H1 (cell line): ENCODE measurements at regions of chr4 and their contacts with region 1.

Region 1: GRCh38 chr4:37188100-37188499 is 56.4 kb upstream of the NWD2 start:
- DNase-seq: peak; percentile 9 to 75
- H3K4me3 ChIP-seq: no peak overlapping the region
- H3K27ac ChIP-seq: no peak overlapping the region
- H3K4me1 ChIP-seq: no peaks in the 10 kb centered on the region
- H3K27me3 ChIP-seq: no peaks in the 10 kb centered on the region
- CTCF ChIP-seq: peak; percentile 48 to 76 (median 50)
- EP300 ChIP-seq: no peak
- POLR2A ChIP-seq: no peak
- RAD21 ChIP-seq: peak; percentile 39 to 43

Region 2: DNA sequence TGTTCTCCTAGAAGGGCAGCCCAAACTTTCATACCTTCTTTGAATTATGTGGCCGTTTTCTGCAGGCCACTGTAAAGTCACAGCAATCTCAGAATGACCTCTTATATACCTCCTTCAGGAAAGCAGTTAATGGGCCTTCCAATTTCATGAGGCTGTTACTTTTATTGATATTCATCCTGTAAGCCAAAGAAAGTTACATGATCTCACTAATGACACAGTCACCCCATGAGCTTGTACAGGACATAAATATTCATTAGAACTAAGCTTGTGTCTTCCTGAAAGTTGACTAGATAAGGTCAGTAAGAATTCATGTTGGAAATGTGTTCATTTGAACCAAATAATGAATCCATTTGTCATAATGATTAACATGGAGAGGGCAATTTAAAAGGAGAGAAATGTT is 226.7 kb before region 1 on chr4:
- CTCF ChIA-PET with region 1: no interaction called
- POLR2A ChIA-PET with region 1: no interaction called
- DNase-seq: no peak
- H3K4me3 ChIP-seq: no peak overlapping the region
- H3K27ac ChIP-seq: no peak overlapping the region
- H3K4me1 ChIP-seq: peaks cover 0 to 3% (median 0%) of the 10 kb centered on the region in 4 experiments; a peak in 1 of 7 replicates
- H3K27me3 ChIP-seq: no peaks in the 10 kb centered on the region
- CTCF ChIP-seq: no peak
- EP300 ChIP-seq: no peak
- POLR2A ChIP-seq: no peak
- RAD21 ChIP-seq: no peak

Region 3: DNA sequence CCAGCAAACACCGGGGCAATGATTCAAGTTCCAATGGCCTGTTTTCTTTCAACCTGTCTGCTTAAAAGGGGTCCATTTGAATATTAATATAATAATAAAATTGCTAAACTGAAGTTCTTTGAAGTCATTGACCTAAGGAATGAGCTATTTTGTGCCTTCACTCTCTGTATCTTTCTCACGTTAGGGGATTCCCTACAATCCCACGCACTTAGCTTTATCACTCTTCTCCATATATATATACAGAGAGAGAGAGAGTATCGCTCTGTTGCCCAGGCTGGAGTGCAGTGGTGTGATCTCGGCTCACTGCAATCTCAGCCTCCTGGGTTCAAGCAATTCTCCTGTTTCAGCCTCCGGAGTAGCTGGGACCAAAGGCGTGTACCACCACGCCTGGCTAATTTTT is 27.4 kb before region 1 on chr4:
- CTCF ChIA-PET with region 1: interaction called, 10 read pairs
- POLR2A ChIA-PET with region 1: no interaction called
- DNase-seq: no peak
- H3K4me3 ChIP-seq: no peak overlapping the region
- H3K27ac ChIP-seq: no peak overlapping the region
- H3K4me1 ChIP-seq: no peaks in the 10 kb centered on the region
- H3K27me3 ChIP-seq: no peaks in the 10 kb centered on the region
- CTCF ChIP-seq: no peak
- EP300 ChIP-seq: no peak
- POLR2A ChIP-seq: no peak
- RAD21 ChIP-seq: no peak

Region 4: GRCh38 chr4:37219242-37219641 is 31.1 kb after region 1 on chr4:
- CTCF ChIA-PET with region 1: no interaction called
- POLR2A ChIA-PET with region 1: no interaction called
- DNase-seq: no peak
- H3K4me3 ChIP-seq: no peak overlapping the region
- H3K27ac ChIP-seq: no peak overlapping the region
- H3K4me1 ChIP-seq: no peaks in the 10 kb centered on the region
- H3K27me3 ChIP-seq: no peaks in the 10 kb centered on the region; a peak in 1 of 7 replicates
- CTCF ChIP-seq: no peak
- EP300 ChIP-seq: no peak
- POLR2A ChIP-seq: no peak
- RAD21 ChIP-seq: no peak

Region 5: DNA sequence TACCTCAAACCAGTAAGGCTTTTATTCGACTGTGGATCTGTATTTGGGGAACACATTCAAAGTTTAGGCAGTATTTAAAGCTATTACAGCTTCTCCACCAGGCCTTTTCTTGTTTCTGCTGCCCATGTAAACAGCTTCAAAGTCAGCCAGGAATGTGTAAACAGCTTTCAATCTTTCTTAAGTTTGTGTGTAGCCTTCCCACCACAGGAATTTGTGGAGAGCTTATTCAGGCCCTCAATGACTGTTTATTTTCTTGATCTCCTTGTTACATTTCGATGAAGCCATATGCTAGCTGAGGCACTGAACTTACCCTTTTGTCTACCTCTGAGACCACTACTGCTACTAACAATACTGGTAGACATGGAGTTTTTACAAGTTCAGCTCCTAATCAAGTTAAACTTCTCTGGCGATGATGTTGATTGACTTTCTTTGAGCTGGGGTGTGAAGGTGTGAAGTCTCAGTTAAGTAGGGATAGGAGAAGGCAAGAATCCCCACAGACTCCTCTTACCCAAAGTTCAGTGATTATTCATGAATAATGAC is 129.1 kb after region 1 on chr4:
- CTCF ChIA-PET with region 1: no interaction called
- POLR2A ChIA-PET with region 1: no interaction called
- DNase-seq: no peak
- H3K4me3 ChIP-seq: no peak overlapping the region
- H3K27ac ChIP-seq: no peak overlapping the region
- H3K4me1 ChIP-seq: peaks cover 0 to 1% (median 0%) of the 10 kb centered on the region in 4 experiments; a peak in 1 of 7 replicates
- H3K27me3 ChIP-seq: no peaks in the 10 kb centered on the region
- CTCF ChIP-seq: no peak
- EP300 ChIP-seq: no peak
- POLR2A ChIP-seq: no peak
- RAD21 ChIP-seq: no peak

Region 6: DNA sequence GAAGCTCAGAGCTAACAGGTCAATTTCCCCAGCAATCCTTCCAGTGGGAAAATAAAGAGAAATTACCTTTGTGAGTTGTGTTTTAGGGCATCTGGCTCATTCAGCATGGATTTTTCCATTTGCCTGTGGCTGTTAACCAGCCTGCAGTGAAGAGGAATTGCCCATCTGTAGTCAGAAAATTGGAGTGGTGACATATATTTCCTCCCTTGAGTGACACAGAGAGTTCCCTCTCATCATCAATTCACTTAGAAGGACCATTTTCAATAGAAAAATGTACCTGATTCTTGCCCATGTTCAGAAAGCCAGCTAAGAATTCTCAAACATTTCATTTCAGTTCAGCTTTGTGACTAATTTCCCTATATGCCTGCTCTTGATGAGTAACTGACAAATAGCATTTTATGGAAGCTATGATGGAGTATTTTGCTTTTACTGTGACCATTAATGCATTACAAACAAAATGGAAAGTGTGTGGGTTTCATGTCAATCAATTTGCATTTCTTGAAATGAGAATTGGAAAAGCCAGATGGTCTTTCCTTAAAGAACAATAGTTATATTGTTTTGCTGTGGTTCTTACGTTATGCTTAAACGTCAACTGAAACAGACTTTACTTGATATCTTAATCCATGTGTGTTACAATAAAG is 212.3 kb after region 1 on chr4:
- CTCF ChIA-PET with region 1: no interaction called
- POLR2A ChIA-PET with region 1: no interaction called
- DNase-seq: no peak
- H3K4me3 ChIP-seq: no peak overlapping the region
- H3K27ac ChIP-seq: no peak overlapping the region
- H3K4me1 ChIP-seq: no peaks in the 10 kb centered on the region
- H3K27me3 ChIP-seq: no peaks in the 10 kb centered on the region
- CTCF ChIP-seq: no peak
- EP300 ChIP-seq: no peak
- POLR2A ChIP-seq: no peak
- RAD21 ChIP-seq: no peak